Caco-2 (cell line): ENCODE measurements at regions of chr20 and their contacts with region 1.

Region 1: DNA sequence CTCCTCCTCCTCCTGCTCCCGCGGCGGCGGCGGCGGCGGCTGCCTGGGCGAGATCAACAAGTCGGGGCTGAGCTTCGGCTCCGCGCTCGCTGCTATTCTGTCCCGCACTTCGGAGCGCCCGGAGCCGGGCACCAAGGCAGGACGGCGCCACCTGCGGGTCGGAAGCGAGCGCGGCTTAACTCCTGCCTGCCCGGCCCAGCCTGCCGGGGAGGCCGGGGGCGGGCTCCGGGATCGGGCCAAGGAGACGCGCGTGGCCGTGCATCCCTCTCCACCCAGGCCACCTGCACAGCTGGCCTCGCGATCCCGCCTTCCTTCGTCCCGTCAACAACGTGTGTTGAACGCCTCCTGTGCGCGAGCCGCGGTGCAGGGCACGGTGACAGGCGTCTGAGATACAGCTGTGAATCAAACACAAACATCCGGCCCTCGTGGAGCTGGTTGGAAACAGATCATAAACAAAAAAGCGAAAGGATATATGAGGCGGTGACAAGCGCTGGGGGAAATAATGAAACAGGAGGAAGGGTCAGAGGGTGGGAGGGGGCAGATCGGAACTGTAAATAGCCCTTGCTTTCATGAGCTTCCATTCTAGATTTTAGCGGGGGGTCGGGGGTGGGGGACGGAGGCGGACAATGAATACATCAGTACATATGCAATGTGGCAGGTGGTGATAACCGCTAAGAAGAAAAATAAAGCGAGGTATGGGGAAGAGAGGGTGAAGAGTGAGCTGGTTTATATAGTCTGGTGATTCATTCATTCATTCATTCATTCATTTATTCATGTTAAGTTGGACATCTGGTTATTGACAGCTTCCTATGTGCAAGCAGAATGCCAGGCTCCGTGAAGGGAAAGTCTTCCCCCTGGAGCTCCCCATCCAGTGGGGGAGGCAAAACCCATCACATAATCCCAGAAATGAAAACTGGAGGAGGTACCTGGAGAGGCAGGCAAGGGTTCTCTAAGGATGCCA is 2.0 kb upstream of the KCNB1 start:
- DNase-seq: peak; percentile 91 to 95
- H3K4me3 ChIP-seq: peak overlapping the region; percentile 55
- H3K4me3 Mint-ChIP-seq: peak overlapping the region; percentile 68
- H3K27ac Mint-ChIP-seq: no peak overlapping the region
- H3K4me1 ChIP-seq: peaks cover 4% of the 10 kb centered on the region; the same call in 1 of the 2 replicates
- H3K4me1 Mint-ChIP-seq: peaks cover 8% of the 10 kb centered on the region
- H3K27me3 ChIP-seq: peaks cover 2% of the 10 kb centered on the region
- H3K27me3 Mint-ChIP-seq: peaks cover 34% of the 10 kb centered on the region
- CTCF ChIP-seq: peak; percentile 96 to 98

Region 2: GRCh38 chr20:49338061-49338460 is 146.4 kb before region 1 on chr20:
- CTCF ChIA-PET with region 1: interaction called, 37 read pairs
- POLR2A ChIA-PET with region 1: no interaction called
- intact Hi-C with region 1: loop called (anchors 1 kb)
- DNase-seq: no peak
- H3K4me3 ChIP-seq: no peak overlapping the region
- H3K4me3 Mint-ChIP-seq: no peak overlapping the region
- H3K27ac Mint-ChIP-seq: no peak overlapping the region
- H3K4me1 ChIP-seq: peaks cover 4% of the 10 kb centered on the region
- H3K4me1 Mint-ChIP-seq: no peaks in the 10 kb centered on the region
- H3K27me3 ChIP-seq: peaks cover 1% of the 10 kb centered on the region; the same call in 1 of the 2 replicates
- H3K27me3 Mint-ChIP-seq: peaks cover 16% of the 10 kb centered on the region
- CTCF ChIP-seq: no peak

Region 3: GRCh38 chr20:49384437-49385088 is 99.9 kb before region 1 on chr20:
- CTCF ChIA-PET with region 1: interaction called, 56 read pairs
- POLR2A ChIA-PET with region 1: no interaction called
- intact Hi-C with region 1: loop called (anchors 1 kb)
- DNase-seq: peak; percentile 87 to 91
- H3K4me3 ChIP-seq: no peak overlapping the region
- H3K4me3 Mint-ChIP-seq: no peak overlapping the region
- H3K27ac Mint-ChIP-seq: no peak overlapping the region
- H3K4me1 ChIP-seq: no peaks in the 10 kb centered on the region
- H3K4me1 Mint-ChIP-seq: no peaks in the 10 kb centered on the region
- H3K27me3 ChIP-seq: no peaks in the 10 kb centered on the region
- H3K27me3 Mint-ChIP-seq: peaks cover 20% of the 10 kb centered on the region
- CTCF ChIP-seq: peak; percentile 93 to 96

Region 4: DNA sequence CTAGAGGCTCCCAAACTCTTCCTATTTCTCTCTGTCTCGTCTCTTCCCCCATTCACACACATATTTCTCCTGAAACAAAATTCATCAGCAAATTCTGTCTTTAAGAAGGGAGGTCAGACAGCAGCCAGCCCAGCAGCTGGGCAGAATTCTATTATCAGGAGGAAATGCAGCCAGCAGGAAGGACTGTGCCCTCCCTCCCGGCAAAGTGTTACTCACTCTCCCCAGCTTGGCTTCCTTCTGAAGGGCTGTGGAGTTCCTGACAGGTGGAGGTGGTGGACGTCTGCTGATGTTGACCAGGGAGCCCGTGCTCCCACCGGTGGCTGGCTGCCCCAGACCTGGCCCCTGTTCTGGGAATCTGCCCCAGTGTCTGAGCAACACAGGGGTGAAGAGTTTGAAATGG is 39.3 kb before region 1 on chr20:
- CTCF ChIA-PET with region 1: interaction called, 3 read pairs
- POLR2A ChIA-PET with region 1: no interaction called
- intact Hi-C with region 1: loop called (anchors 2 kb)
- DNase-seq: no peak
- H3K4me3 ChIP-seq: no peak overlapping the region
- H3K4me3 Mint-ChIP-seq: no peak overlapping the region
- H3K27ac Mint-ChIP-seq: no peak overlapping the region
- H3K4me1 ChIP-seq: no peaks in the 10 kb centered on the region
- H3K4me1 Mint-ChIP-seq: no peaks in the 10 kb centered on the region
- H3K27me3 ChIP-seq: no peaks in the 10 kb centered on the region
- H3K27me3 Mint-ChIP-seq: peaks cover 19% of the 10 kb centered on the region
- CTCF ChIP-seq: no peak

Region 5: DNA sequence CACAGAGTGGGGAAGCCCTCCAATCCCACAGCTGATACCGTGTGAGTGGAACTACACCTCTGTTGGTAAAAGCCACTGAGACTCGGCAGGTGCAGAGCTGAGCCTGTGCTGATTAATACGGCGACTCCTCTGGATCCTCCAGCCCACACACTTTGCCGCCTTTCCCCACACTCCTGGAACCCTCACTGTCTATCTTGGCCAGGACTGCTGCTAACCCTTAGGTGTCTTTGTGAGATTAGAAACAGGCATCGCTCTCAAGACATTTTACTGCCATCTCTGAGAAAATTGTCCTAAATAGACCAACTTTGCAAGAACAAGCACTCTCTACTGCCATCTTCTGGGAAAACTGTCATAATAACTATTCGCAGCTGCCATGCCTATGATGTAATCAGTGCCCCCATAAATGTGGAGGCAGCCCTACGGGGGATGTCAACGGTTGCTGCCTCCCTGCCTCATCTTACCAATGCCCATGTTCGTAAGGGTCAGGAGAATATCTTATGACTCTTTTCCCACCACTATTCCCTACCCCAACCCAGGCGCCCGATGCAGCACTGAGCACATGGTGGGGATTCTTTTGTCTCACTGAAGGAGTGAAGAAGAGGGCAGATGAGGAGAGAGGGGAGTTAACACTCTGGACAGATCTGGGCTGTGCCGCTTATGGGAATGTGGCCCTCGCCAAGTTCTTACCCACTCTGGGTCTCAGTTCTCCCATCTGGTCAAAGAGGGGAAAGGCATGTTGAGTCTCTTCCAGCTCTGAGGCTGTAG is 24.2 kb after region 1 on chr20:
- CTCF ChIA-PET with region 1: interaction called, 23 read pairs
- POLR2A ChIA-PET with region 1: no interaction called
- intact Hi-C with region 1: loop called (anchors 2 kb)
- DNase-seq: peak; percentile 46 to 73
- H3K4me3 ChIP-seq: no peak overlapping the region
- H3K4me3 Mint-ChIP-seq: no peak overlapping the region
- H3K27ac Mint-ChIP-seq: no peak overlapping the region
- H3K4me1 ChIP-seq: peaks cover 8% of the 10 kb centered on the region
- H3K4me1 Mint-ChIP-seq: no peaks in the 10 kb centered on the region
- H3K27me3 ChIP-seq: no peaks in the 10 kb centered on the region; the same call in 1 of the 2 replicates
- H3K27me3 Mint-ChIP-seq: peaks cover 7% of the 10 kb centered on the region
- CTCF ChIP-seq: peak; percentile 77 to 98